WTC11 (cell line): ENCODE measurements at regions of chr16 and their contacts with region 1.

Region 1: DNA sequence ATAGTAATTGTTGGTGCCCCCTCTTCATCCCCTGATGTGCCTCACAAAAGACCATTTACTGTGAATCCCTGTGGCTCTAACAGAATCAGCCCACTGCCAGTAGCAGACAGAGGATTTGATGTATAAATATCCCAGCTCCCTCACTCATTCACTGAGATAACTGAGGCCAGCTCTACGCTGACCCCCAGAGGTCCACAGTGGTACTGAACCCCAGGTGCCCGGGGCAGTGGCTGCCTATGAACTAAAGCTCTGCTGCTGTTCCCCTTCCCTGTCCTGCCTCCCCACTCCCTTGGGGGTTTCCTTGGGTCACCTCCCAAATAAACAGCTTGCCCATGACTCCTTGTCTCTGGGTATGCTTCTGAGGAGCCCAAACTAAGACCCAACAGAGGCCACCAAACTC is 295.8 kb downstream of the FOXL1 start:
- DNase-seq: peak; percentile 80
- ATAC-seq: peak; percentile 96
- H3K4me3 Mint-ChIP-seq: no peak overlapping the region
- H3K27ac Mint-ChIP-seq: no peak overlapping the region
- H3K4me1 Mint-ChIP-seq: no peaks in the 10 kb centered on the region
- H3K27me3 Mint-ChIP-seq: peaks cover 3% of the 10 kb centered on the region
- CTCF ChIP-seq: peak; percentile 81

Region 2: GRCh38 chr16:86570558-86571529 is 303.3 kb before region 1 on chr16:
- CTCF ChIA-PET with region 1: interaction called, 18 read pairs
- POLR2A ChIA-PET with region 1: no interaction called
- DNase-seq: no peak
- ATAC-seq: no peak
- H3K4me3 Mint-ChIP-seq: peak overlapping the region; percentile 28
- H3K27ac Mint-ChIP-seq: no peak overlapping the region
- H3K4me1 Mint-ChIP-seq: peaks cover 57% of the 10 kb centered on the region
- H3K27me3 Mint-ChIP-seq: peaks cover 94% of the 10 kb centered on the region
- CTCF ChIP-seq: no peak

Region 3: DNA sequence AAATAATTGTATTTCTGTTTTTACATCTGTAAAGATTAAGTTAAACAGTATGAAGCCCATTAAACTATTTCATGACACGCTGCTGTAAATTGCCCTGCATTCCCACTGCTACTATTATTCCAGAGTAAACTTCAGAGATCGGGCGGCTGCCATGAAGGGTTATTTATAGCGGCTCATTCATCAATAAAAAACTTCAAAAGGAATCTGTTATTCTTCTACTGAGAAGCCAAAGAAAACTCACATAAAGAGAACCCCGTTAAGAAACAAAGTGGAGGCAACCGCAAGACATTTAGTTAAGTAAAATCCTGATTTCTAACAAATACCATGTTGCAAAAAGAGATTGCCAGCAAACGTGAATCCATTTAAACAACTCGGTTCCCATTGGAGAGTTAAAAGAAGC is 279.4 kb before region 1 on chr16:
- CTCF ChIA-PET with region 1: interaction called, 11 read pairs
- POLR2A ChIA-PET with region 1: no interaction called
- DNase-seq: no peak
- ATAC-seq: no peak
- H3K4me3 Mint-ChIP-seq: no peak overlapping the region
- H3K27ac Mint-ChIP-seq: no peak overlapping the region
- H3K4me1 Mint-ChIP-seq: peaks cover 4% of the 10 kb centered on the region; the same call in 1 of the 2 replicates
- H3K27me3 Mint-ChIP-seq: peaks cover 3% of the 10 kb centered on the region; the same call in 1 of the 2 replicates
- CTCF ChIP-seq: no peak

Region 4: GRCh38 chr16:86681031-86681756 is 192.9 kb before region 1 on chr16:
- CTCF ChIA-PET with region 1: no interaction called
- POLR2A ChIA-PET with region 1: no interaction called
- DNase-seq: no peak
- ATAC-seq: no peak
- H3K4me3 Mint-ChIP-seq: no peak overlapping the region
- H3K27ac Mint-ChIP-seq: no peak overlapping the region
- H3K4me1 Mint-ChIP-seq: no peaks in the 10 kb centered on the region
- H3K27me3 Mint-ChIP-seq: peaks cover 3% of the 10 kb centered on the region; the same call in 1 of the 2 replicates
- CTCF ChIP-seq: no peak

Region 5: GRCh38 chr16:86894029-86894567 is 20.0 kb after region 1 on chr16:
- CTCF ChIA-PET with region 1: interaction called, 14 read pairs
- POLR2A ChIA-PET with region 1: no interaction called
- DNase-seq: no peak
- ATAC-seq: no peak
- H3K4me3 Mint-ChIP-seq: no peak overlapping the region
- H3K27ac Mint-ChIP-seq: no peak overlapping the region
- H3K4me1 Mint-ChIP-seq: peaks cover 17% of the 10 kb centered on the region
- H3K27me3 Mint-ChIP-seq: no peaks in the 10 kb centered on the region; the same call in 1 of the 2 replicates
- CTCF ChIP-seq: no peak

Region 6: DNA sequence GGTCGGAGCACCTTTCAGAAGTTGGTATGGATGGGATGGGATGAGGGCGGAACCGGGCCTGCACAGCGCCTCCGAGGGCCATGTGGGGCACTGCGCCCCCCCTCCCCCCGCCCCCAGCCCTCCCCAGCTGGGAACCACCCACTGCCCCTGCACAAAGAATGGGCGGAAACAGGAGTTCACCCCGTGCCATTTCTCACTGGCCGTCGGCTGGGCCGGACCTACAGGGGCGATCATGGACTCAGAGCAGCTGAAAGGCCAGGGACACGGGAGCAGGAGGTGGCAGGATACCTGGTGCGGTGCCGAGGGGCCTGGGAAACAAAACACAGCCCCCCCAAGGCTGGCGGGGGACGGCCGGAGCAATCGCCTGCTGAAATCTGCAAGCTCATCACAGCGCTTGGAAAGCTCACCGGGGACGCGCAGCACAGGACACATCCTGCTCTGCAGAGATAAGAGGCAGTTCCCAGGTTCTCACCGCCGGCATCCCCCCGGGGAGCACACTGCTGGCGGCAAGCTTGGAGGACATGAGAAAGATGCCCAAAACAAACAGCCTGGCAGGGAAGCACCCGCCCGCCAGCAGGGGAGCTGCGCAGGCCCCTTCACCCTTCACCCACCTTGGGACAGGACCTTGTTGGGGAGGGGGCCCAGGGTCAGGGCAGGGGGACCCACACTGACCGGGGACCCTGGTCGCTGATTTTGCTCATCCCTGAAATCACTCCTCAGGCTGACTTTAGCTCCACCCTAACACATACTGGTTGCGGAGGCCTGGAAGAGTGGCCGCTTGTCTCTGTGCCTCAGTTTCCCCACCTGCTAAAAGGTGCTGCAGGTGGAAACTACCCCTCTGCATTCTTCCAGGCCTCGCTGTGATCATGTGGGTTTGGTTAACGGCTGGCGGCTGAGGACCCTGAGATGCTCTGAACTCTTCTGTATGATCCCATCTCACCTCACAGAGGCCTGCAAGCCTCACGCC is 179.2 kb after region 1 on chr16:
- CTCF ChIA-PET with region 1: interaction called, 10 read pairs
- POLR2A ChIA-PET with region 1: no interaction called
- DNase-seq: peak; percentile 45
- ATAC-seq: peak; percentile 81
- H3K4me3 Mint-ChIP-seq: peak overlapping the region; percentile 43
- H3K27ac Mint-ChIP-seq: no peak overlapping the region
- H3K4me1 Mint-ChIP-seq: peaks cover 4% of the 10 kb centered on the region
- H3K27me3 Mint-ChIP-seq: peaks cover 6% of the 10 kb centered on the region
- CTCF ChIP-seq: peak; percentile 45; the same call in 1 of the 2 replicates

Region 7: GRCh38 chr16:87263471-87263961 is 389.4 kb after region 1 on chr16:
- CTCF ChIA-PET with region 1: no interaction called
- POLR2A ChIA-PET with region 1: no interaction called
- DNase-seq: no peak
- ATAC-seq: no peak; the same call in 1 of the 2 replicates
- H3K4me3 Mint-ChIP-seq: no peak overlapping the region
- H3K27ac Mint-ChIP-seq: no peak overlapping the region
- H3K4me1 Mint-ChIP-seq: peaks cover 8% of the 10 kb centered on the region
- H3K27me3 Mint-ChIP-seq: peaks cover 3% of the 10 kb centered on the region; the same call in 1 of the 2 replicates
- CTCF ChIP-seq: no peak